ENCODE measurements at regions of chr2 and their contacts with region 1.

Region 1: GRCh38 chr2:110677530-110678456 is at the start of gene BUB1:
- DNase-seq: peak; percentile 95
- ATAC-seq: peak; percentile 89
- H3K4me3 Mint-ChIP-seq: peak within 1 kb of the TSS; percentile 100
- H3K27ac Mint-ChIP-seq: peak within 1 kb of the TSS; percentile 100
- H3K4me1 Mint-ChIP-seq: peaks cover 29% of the 10 kb centered on the region
- H3K27me3 Mint-ChIP-seq: peaks cover 7% of the 10 kb centered on the region
- total RNA-seq, gene BUB1: 89.3 to 91.9 TPM

Region 2: GRCh38 chr2:110650346-110650745 is 27.4 kb before region 1 on chr2:
- POLR2A ChIA-PET with region 1: interaction called, 10 read pairs
- DNase-seq: no peak
- ATAC-seq: no peak
- H3K4me3 Mint-ChIP-seq: no peak overlapping the region
- H3K27ac Mint-ChIP-seq: no peak overlapping the region
- H3K4me1 Mint-ChIP-seq: no peaks in the 10 kb centered on the region
- H3K27me3 Mint-ChIP-seq: no peaks in the 10 kb centered on the region

Region 3: GRCh38 chr2:110702514-110703380 is 25.0 kb after region 1 on chr2:
- POLR2A ChIA-PET with region 1: no interaction called
- DNase-seq: no peak
- ATAC-seq: no peak
- H3K4me3 Mint-ChIP-seq: no peak overlapping the region
- H3K27ac Mint-ChIP-seq: no peak overlapping the region
- H3K4me1 Mint-ChIP-seq: no peaks in the 10 kb centered on the region
- H3K27me3 Mint-ChIP-seq: peaks cover 40% of the 10 kb centered on the region

Region 4: DNA sequence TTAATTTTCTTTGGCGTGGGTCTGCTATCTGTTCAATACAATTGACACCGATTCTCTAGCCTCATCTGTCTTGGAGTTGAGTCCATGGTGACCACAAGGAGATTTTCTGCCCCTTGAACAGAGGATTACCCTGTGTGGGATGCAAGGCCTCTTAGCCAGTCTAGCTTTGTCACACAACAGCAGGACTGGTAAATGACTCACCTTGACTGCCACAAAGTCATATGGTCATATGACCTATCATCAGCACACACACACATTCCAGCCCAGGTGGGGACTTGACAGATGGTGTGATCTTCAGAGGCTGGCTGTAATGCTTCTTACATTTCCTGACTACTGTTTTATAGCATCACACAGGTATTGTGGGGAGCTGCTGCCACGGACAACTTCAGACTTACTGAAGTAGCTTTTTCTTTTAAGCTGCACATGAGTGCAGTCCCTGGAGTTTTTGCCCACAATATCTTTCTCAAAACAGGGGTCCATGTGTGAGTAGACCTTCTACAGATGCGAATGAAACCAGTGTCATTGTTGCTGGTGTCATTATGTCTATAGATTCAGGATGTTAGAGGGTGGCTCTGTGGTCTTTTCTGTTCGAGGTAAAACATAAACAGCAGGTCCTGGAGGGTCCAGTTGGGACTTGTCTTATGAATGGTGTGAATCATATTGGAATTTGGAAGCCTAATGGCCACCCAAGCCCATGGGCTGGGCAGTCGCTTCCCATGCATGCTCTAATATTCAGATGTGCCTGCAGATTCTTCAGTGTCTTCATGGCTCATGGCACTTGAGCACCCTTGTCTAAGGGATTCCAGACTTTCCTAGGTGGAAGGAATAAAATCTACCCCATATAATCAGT is 35.9 kb after region 1 on chr2:
- POLR2A ChIA-PET with region 1: no interaction called
- DNase-seq: no peak
- ATAC-seq: no peak
- H3K4me3 Mint-ChIP-seq: no peak overlapping the region
- H3K27ac Mint-ChIP-seq: no peak overlapping the region
- H3K4me1 Mint-ChIP-seq: peaks cover 3% of the 10 kb centered on the region
- H3K27me3 Mint-ChIP-seq: peaks cover 60% of the 10 kb centered on the region

Region 5: DNA sequence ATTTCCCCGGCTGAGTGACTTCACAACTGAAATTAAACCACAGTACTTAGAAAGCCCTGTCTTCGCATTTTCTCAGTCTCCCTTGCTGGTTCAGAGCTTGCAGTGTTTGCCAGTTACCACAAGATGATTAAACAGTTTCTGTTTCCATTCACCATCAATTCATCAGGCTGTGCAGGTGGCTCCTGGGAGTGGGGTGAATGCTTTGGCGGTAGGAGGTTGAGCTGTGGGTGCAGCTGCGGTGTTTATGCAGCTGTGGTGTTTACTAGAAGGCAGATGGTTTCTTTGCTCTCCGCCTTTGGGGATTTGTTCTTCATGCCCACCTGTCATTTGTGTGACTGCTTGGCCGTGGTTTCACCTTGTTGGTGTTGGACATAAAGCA is 70.7 kb after region 1 on chr2:
- POLR2A ChIA-PET with region 1: interaction called, 13 read pairs
- DNase-seq: peak; percentile 76
- ATAC-seq: peak; percentile 98
- H3K4me3 Mint-ChIP-seq: peak overlapping the region; percentile 69
- H3K27ac Mint-ChIP-seq: peak overlapping the region; percentile 60
- H3K4me1 Mint-ChIP-seq: peaks cover 19% of the 10 kb centered on the region
- H3K27me3 Mint-ChIP-seq: peaks cover 32% of the 10 kb centered on the region

Region 6: DNA sequence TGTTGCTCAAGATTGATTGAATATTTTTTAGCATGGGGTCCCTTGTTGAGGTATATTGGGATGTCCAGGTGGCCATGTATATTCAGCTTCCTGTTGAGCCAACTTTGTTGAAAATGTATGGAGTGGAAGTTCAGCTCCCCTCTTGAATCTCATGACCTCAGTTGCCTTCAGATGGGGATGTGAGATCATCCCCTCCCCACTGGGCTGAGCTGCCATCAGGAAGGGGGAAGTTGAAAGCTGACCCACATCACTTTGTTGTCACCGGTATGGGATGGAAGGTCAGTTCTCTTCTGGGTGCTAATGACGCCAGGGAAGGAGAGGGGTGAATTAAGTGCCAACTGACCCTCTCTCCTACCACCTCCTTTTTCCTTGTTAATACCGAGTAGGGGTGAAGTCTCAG is 88.5 kb after region 1 on chr2:
- POLR2A ChIA-PET with region 1: no interaction called
- DNase-seq: no peak
- ATAC-seq: no peak
- H3K4me3 Mint-ChIP-seq: no peak overlapping the region
- H3K27ac Mint-ChIP-seq: no peak overlapping the region
- H3K4me1 Mint-ChIP-seq: no peaks in the 10 kb centered on the region
- H3K27me3 Mint-ChIP-seq: peaks cover 15% of the 10 kb centered on the region

Measured in activated naive CD8-positive, alpha-beta T cell treated with anti-CD3 and anti-CD28 coated beads, Interleukin-2, amount 10 ng/mL, durations not matched to agents 7 days and 5 days (primary cell).